PC-9 (cell line): ENCODE measurements at regions of chr17 and their contacts with region 1.

Region 1: DNA sequence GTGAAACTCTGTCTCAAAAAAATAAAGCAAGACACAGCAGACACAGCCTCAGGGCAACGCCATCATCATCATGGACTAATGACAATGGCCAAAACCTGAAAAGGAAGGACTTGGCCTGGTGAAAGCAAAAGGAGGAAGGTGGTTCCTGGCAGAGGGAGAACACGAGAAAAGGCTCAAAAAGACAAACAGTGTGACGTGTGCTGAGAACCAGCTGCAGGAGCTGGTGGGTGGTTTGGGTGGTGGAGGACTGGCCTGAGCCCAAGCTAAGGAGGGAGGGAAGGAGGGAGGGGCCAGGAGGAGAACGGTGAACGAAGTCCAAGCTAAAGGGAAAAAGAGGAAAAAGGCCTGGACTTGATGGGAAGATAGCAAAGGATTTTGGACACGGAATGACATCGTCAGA is 85.1 kb downstream of the SLC39A11 start:
- DNase-seq: no peak
- H3K4me3 ChIP-seq: no peak overlapping the region
- H3K27ac ChIP-seq: no peak overlapping the region
- H3K4me1 ChIP-seq: peaks cover 9% of the 10 kb centered on the region
- H3K27me3 ChIP-seq: no peaks in the 10 kb centered on the region
- CTCF ChIP-seq: no peak

Region 2: GRCh38 chr17:73092523-73093135 is 85.2 kb after region 1 on chr17 and contains the start of gene SLC39A11:
- CTCF ChIA-PET with region 1: no interaction called
- POLR2A ChIA-PET with region 1: no interaction called
- intact Hi-C with region 1: loop called (anchors 10 kb)
- DNase-seq: peak; percentile 85 to 90
- H3K4me3 ChIP-seq: peak within 1 kb of the TSS; percentile 59
- H3K27ac ChIP-seq: no peak within 1 kb of the TSS
- H3K4me1 ChIP-seq: peaks cover 6% of the 10 kb centered on the region; the same call in 1 of the 2 replicates
- H3K27me3 ChIP-seq: no peaks in the 10 kb centered on the region
- CTCF ChIP-seq: no peak
- total RNA-seq, gene SLC39A11: 57.1 and 84.3 TPM in 2 replicates

Region 3: DNA sequence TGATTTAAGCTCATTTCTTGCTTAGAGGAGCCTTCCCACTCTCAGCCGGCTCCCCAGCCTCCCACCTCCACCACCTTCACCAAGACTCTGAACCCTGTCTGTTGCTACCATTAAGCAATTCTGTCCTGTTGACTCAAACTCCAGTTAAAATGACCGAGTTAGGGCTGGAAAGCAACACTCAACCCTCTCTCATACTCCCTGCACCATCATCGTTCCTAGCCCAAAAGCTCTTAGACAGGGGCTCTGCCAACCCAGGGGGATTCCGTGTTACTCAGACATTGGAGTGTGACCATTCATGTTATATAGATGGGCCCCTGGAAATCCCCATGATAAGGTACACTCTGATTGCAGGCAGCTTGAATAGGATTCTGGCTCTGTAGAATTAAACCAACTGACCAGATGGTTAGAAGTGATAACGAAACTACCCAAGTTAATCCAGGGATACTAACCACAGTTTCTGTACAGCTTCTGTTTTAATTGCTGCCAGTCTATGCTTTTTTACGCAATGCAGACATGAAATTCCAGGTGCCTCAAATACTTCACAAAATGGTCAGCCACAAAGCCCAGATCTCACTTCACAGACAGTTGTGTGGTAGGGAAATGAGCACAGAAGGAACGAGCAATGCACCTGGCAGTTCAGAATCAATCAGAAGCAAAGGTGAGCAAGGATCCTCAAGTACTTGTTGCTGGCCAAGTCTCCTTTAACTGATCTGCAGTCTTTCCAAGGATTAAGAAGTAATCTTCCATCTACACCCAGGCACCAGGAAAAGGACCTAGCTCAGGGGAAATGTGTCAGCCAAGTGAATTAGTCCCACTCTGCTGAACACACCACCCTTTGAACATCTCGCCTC is 159.5 kb after region 1 on chr17:
- CTCF ChIA-PET with region 1: no interaction called
- POLR2A ChIA-PET with region 1: no interaction called
- intact Hi-C with region 1: loop called (anchors 10 kb)
- DNase-seq: no peak
- H3K4me3 ChIP-seq: peak overlapping the region; percentile 47; the same call in 1 of the 2 replicates
- H3K27ac ChIP-seq: no peak overlapping the region
- H3K4me1 ChIP-seq: 0 out of 2 replicates have a peak, but pooled peaks cover 5% of the 10 kb centered on the region
- H3K27me3 ChIP-seq: peaks cover 34% of the 10 kb centered on the region; the same call in 1 of the 2 replicates
- CTCF ChIP-seq: no peak